ENCODE measurements at regions of chr6 and their contacts with region 1.

Region 1: DNA sequence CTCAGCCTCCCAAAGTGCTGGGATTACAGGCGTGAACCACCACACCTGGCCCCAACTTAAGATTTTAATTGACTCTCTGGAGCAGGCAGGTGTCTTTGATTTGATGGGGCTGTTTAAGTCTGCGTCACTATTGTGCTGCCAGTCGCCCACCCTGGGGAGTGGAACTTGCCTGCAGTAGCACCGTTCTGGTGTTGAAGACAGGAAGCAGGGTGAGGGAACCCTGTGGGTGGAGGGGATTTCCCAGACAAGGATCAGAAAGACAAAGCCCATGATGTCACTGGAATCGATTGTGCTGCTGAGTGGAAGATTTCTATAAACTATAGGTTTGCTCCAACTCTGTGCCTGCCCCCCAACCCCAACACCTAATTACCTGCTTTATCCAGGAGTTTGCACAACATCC is 11.0 kb downstream of the ALDH8A1 start:
- DNase-seq: peak in 6 of 9 experiments; percentile 4 to 76 (median 40)
- ATAC-seq: peak; percentile 96
- H3K4me3 ChIP-seq: no peak overlapping the region
- H3K4me3 Mint-ChIP-seq: no peak overlapping the region
- H3K27ac ChIP-seq: no peak overlapping the region
- H3K27ac Mint-ChIP-seq: no peak overlapping the region
- H3K4me1 ChIP-seq: peaks cover 9% of the 10 kb centered on the region
- H3K4me1 Mint-ChIP-seq: peaks cover 10% of the 10 kb centered on the region
- H3K27me3 ChIP-seq: no peaks in the 10 kb centered on the region
- H3K27me3 Mint-ChIP-seq: no peaks in the 10 kb centered on the region
- CTCF ChIP-seq: no peak

Region 2: GRCh38 chr6:134123666-134124208 is 815.2 kb before region 1 on chr6:
- CTCF ChIA-PET with region 1: interaction called, 35 read pairs
- POLR2A ChIA-PET with region 1: no interaction called
- intact Hi-C with region 1: loop called in 1 of 2 experiments (anchors 2 kb)
- DNase-seq: peak in 5 of 9 experiments; percentile 2 to 69 (median 47)
- ATAC-seq: peak; percentile 99
- H3K4me3 ChIP-seq: no peak overlapping the region
- H3K4me3 Mint-ChIP-seq: no peak overlapping the region
- H3K27ac ChIP-seq: no peak overlapping the region
- H3K27ac Mint-ChIP-seq: no peak overlapping the region
- H3K4me1 ChIP-seq: no peaks in the 10 kb centered on the region
- H3K4me1 Mint-ChIP-seq: peaks cover 4% of the 10 kb centered on the region
- H3K27me3 ChIP-seq: no peaks in the 10 kb centered on the region
- H3K27me3 Mint-ChIP-seq: no peaks in the 10 kb centered on the region
- CTCF ChIP-seq: peak; percentile 92

Region 3: DNA sequence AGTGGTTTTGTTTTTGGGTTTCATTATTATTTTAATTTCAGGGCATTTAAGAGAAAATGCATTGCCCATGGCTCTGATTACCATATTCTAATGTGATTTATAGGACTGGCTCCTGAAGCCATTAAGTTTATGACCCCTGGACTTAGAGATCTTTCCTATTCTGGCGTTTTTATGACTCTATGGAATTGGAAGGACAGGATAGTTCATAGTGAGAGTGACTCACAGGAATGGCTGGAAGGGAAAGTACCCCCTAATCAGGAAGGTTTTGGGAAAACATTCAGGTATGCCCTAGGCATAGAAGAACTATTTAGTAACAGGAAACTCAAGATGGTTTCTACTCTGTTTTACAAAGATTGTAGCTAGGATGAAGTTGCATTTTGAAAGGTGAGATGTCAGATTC is 777.9 kb before region 1 on chr6:
- CTCF ChIA-PET with region 1: interaction called, 76 read pairs
- POLR2A ChIA-PET with region 1: interaction called, 4 read pairs
- intact Hi-C with region 1: loop called (anchors 1 kb)
- DNase-seq: no peak
- ATAC-seq: no peak
- H3K4me3 ChIP-seq: no peak overlapping the region
- H3K4me3 Mint-ChIP-seq: no peak overlapping the region
- H3K27ac ChIP-seq: no peak overlapping the region
- H3K27ac Mint-ChIP-seq: no peak overlapping the region
- H3K4me1 ChIP-seq: no peaks in the 10 kb centered on the region
- H3K4me1 Mint-ChIP-seq: no peaks in the 10 kb centered on the region
- H3K27me3 ChIP-seq: no peaks in the 10 kb centered on the region
- H3K27me3 Mint-ChIP-seq: no peaks in the 10 kb centered on the region
- CTCF ChIP-seq: no peak

Region 4: GRCh38 chr6:134918418-134918961 is 20.4 kb before region 1 on chr6:
- CTCF ChIA-PET with region 1: interaction called, 14 read pairs
- POLR2A ChIA-PET with region 1: no interaction called
- intact Hi-C with region 1: no loop called
- DNase-seq: no peak
- ATAC-seq: no peak
- H3K4me3 ChIP-seq: no peak overlapping the region
- H3K4me3 Mint-ChIP-seq: no peak overlapping the region
- H3K27ac ChIP-seq: no peak overlapping the region
- H3K27ac Mint-ChIP-seq: no peak overlapping the region
- H3K4me1 ChIP-seq: no peaks in the 10 kb centered on the region
- H3K4me1 Mint-ChIP-seq: no peaks in the 10 kb centered on the region
- H3K27me3 ChIP-seq: no peaks in the 10 kb centered on the region
- H3K27me3 Mint-ChIP-seq: no peaks in the 10 kb centered on the region
- CTCF ChIP-seq: no peak